H1 (cell line): ENCODE measurements at regions of chr2 and their contacts with region 1.

Region 1: DNA sequence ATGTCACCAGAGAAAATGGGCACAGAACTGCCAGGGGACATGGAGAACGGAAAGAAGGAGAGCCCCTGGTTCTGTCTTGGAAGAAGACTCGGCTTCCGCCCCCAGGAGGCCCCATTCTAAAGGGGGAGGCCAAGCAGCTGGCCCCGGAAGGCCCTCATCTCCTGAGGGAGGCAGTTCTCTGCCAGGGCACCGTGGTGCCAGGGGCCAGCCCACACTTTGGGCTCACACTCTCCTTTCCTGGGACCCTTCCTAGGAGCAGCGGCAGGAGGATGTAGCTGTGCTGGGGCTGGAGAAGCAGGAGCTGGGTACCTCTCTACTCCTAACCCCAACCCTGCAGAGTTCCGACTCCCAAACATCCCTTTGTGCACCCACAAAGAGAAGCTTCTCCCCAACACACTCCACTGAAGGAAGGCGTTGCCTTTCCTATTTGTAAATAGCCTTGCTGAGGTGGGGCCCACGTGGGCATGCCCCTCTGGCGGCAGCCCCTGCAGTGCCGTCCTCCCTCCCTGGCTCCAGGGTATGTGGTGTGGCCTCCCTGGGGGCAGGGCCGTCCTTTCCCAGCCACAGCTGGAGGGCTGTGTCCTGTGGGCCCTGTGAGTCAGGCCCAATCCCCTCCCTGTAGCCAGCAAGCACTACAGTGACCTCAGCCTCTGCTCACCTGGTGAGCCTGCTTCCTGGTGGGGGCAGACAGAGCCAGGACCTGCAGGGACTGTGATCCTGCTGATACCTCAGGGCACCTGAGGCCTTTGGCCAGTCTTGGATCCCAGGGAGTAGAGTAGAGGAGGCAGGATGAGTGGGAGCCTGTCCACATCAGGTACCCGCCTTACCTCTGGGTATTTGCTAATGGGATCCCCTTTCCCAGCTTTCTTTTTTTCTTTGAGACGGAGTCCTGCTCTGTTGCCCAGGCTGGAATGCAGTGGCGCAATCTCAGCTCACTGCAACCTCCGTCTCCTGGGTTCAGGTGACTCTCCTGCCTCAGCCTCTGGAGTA is 26.6 kb downstream of the ZFP36L2 start:
- DNase-seq: no peak
- H3K4me3 ChIP-seq: no peak overlapping the region
- H3K27ac ChIP-seq: no peak overlapping the region
- H3K4me1 ChIP-seq: peaks cover 4 to 9% (median 7%) of the 10 kb centered on the region in 4 experiments
- H3K27me3 ChIP-seq: no peaks in the 10 kb centered on the region
- CTCF ChIP-seq: no peak
- EP300 ChIP-seq: no peak
- POLR2A ChIP-seq: no peak
- RAD21 ChIP-seq: no peak

Region 2: GRCh38 chr2:43210467-43211303 is 10.9 kb after region 1 on chr2:
- CTCF ChIA-PET with region 1: interaction called, 42 read pairs
- POLR2A ChIA-PET with region 1: interaction called, 5 read pairs
- DNase-seq: no peak
- H3K4me3 ChIP-seq: no peak overlapping the region
- H3K27ac ChIP-seq: no peak overlapping the region
- H3K4me1 ChIP-seq: peaks cover 0 to 12% (median 6%) of the 10 kb centered on the region in 4 experiments; a peak in 5 of 7 replicates
- H3K27me3 ChIP-seq: no peaks in the 10 kb centered on the region
- CTCF ChIP-seq: no peak
- EP300 ChIP-seq: no peak
- POLR2A ChIP-seq: no peak
- RAD21 ChIP-seq: no peak

Region 3: DNA sequence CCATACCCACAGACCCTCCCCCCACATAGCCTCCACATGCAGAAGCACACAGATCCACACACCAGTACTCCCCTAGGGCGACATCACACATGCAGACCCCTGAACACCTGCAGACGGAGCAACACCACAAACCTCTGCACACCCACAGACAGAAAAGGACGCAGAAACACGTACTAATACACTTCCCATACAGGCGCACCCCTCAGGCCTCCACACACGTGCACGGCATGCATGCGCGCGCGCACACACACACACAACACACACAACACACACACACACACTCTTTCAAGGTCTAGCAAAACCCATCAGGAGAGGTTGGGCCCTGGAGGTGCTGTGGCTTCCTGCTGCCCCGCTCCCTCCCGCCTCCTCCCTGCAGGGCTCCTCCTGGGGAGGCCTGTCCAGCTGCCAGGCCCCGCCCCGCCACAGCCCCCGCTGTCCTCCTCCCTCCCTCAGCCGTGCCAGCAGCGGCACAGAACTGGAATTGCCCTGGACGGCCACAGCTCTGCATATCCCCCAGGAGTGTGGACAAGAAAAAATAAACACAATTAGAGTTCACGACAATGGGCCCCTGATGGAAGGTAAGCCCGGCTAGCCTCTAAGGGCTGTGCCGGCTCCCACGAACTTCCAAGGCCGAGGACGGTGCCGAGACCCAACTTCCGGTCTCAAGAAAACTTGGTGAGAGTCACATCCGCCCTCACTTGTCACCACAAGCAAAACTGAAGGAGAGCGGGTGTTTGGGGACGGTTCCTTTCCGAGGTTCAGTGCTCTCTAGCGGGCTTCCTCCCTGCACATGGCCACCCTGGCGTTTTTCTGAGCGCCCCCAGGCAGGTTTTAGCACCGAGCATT is 19.8 kb after region 1 on chr2:
- CTCF ChIA-PET with region 1: interaction called, 42 read pairs
- POLR2A ChIA-PET with region 1: interaction called, 4 read pairs
- DNase-seq: peak in 1 of 2 experiments; percentile 76
- H3K4me3 ChIP-seq: peak overlapping the region; percentile 14 to 83 (median 34); a peak in 7 of 8 replicates
- H3K27ac ChIP-seq: peak overlapping the region; percentile 65; the same call in 1 of the 2 replicates
- H3K4me1 ChIP-seq: peaks cover 20 to 43% (median 25%) of the 10 kb centered on the region in 4 experiments
- H3K27me3 ChIP-seq: no peaks in the 10 kb centered on the region
- CTCF ChIP-seq: no peak
- EP300 ChIP-seq: no peak
- POLR2A ChIP-seq: no peak
- RAD21 ChIP-seq: no peak

Region 4: GRCh38 chr2:43239981-43240761 is 40.4 kb after region 1 on chr2:
- CTCF ChIA-PET with region 1: no interaction called
- POLR2A ChIA-PET with region 1: no interaction called
- DNase-seq: no peak
- H3K4me3 ChIP-seq: no peak overlapping the region
- H3K27ac ChIP-seq: no peak overlapping the region
- H3K4me1 ChIP-seq: no peaks in the 10 kb centered on the region; a peak in 1 of 7 replicates
- H3K27me3 ChIP-seq: no peaks in the 10 kb centered on the region
- CTCF ChIP-seq: peak; percentile 26 to 56 (median 54)
- EP300 ChIP-seq: no peak
- POLR2A ChIP-seq: no peak
- RAD21 ChIP-seq: peak; percentile 48 to 68